ENCODE measurements at regions of chr6 and their contacts with region 1.

Region 1: GRCh38 chr6:163688739-163689362 is 274.3 kb downstream of the QKI start:
- DNase-seq: no peak
- H3K4me3 ChIP-seq: no peak overlapping the region
- H3K27ac ChIP-seq: no peak overlapping the region
- H3K4me1 ChIP-seq: no peaks in the 10 kb centered on the region
- H3K27me3 ChIP-seq: no peaks in the 10 kb centered on the region
- CTCF ChIP-seq: no peak
- POLR2A ChIP-seq: no peak

Region 2: DNA sequence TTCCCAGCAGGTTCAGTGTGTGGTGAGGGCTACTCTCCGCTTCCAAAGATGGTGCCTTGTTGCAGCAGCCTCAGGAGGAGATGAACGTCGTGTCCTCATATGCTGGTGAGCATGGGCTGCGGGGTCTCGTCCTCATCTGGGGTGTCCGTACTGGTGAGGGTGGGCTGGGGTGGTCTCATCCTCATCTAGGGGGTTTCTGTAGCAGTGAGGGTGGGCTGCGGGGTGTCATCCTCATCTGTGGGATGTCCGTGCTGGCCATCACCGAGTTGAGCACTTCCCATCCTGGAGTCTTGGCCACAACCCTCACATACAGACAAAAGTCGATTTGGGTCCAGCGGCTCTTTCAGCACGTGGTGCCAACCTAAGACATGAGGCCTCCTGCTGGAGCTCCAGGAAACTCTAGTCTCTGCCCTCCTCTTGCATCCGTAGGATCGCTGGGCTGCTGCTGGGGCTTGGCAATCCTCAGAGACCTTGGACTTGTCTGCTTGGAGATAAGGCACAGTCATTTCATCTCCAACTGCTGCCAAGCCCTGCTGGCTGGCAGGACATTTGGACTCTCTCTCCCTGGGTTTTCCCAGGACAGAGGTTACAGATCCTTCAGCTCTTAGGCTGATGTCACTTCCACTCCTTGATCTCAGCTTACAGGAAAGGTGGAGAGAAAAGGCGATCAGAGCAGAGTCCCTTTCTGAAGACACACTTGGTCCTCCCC is 800.7 kb before region 1 on chr6:
- intact Hi-C with region 1: loop called (anchors 5 kb)
- DNase-seq: no peak
- H3K4me3 ChIP-seq: no peak overlapping the region
- H3K27ac ChIP-seq: no peak overlapping the region
- H3K4me1 ChIP-seq: no peaks in the 10 kb centered on the region
- H3K27me3 ChIP-seq: no peaks in the 10 kb centered on the region
- CTCF ChIP-seq: no peak
- POLR2A ChIP-seq: no peak

Region 3: DNA sequence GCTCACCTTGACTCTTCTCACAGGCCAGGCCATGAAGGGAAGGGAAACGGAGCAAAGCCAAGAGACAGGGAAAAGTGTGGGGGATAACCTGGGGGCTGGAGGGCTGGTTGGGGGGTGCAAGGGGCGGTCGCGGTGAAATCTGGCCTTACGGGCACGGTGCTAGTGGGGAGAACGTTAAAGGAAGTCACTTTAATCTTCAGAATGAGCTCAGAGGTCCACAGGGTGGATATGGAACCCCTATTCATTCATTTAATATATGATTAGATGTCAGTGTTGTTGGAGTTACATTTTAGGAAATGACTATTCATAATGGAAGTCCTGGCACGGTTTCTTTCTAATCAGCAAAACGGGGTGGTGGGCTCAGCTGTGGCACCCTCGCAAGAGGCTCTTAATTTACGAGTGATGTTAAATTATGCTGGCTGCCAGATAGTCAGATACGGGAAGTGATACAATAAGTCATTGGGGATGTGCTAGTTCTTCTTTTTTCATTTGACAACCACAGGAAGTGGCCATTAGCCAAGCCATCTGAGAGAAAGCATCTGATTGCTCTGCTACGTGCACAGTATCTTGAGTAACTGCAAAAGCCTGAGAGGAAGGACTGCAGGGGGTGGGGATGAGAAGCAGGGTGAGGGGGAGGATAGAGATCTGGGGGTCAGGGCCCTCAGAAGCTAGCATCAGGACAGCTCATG is 21.3 kb before region 1 on chr6:
- intact Hi-C with region 1: no loop called
- DNase-seq: peak in 1 of 2 donors; percentile 19
- H3K4me3 ChIP-seq: no peak overlapping the region
- H3K27ac ChIP-seq: no peak overlapping the region
- H3K4me1 ChIP-seq: no peaks in the 10 kb centered on the region
- H3K27me3 ChIP-seq: no peaks in the 10 kb centered on the region
- CTCF ChIP-seq: no peak
- POLR2A ChIP-seq: no peak

Region 4: GRCh38 chr6:163725008-163725941 is 36.4 kb after region 1 on chr6:
- intact Hi-C with region 1: no loop called
- DNase-seq: no peak
- H3K4me3 ChIP-seq: no peak overlapping the region
- H3K27ac ChIP-seq: no peak overlapping the region
- H3K4me1 ChIP-seq: no peaks in the 10 kb centered on the region
- H3K27me3 ChIP-seq: no peaks in the 10 kb centered on the region
- CTCF ChIP-seq: no peak
- POLR2A ChIP-seq: no peak